ENCODE measurements at regions of chrX and their contacts with region 1.

Region 1: DNA sequence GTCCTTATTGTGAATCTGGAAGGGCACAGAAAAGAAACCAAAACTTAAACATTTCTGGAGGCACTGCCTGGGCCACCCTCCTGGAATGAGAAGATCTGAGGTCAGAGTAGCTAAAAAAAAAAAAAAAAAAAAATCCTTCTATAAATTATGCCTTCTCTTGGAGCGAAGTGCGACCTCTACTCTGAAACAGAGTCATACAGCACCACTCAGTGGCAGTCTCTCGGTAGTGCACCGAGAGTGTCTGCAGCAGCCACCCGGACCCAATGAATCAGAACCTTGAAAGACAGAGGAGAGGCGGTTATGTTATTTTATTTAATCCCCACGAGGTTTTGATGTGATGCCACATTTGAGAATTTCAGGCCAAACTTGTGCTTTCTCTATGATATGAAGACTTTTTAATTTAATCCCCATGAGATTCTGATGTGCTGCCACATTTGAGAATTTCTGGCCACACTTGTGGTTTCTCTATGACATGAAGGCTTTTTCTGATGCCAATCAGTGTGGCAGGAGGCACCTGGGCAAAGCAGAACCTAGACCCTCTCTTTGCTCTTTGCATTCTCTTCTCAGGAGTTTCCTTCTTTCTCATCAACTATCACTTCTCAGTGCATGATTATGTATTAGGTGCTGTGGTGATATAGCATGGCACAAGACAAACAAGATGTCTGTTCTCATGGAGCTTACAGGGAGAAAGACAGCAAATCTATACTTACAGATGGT is 5.6 kb upstream of the CT47C1 start:
- DNase-seq: peak; percentile 26 to 52
- H3K4me3 ChIP-seq: no peak overlapping the region
- H3K27ac ChIP-seq: no peak overlapping the region
- H3K4me1 ChIP-seq: no peaks in the 10 kb centered on the region
- H3K27me3 ChIP-seq: peaks cover 0 to 32% of the 10 kb centered on the region in 2 donors
- CTCF ChIP-seq: peak in 2 of 3 donors; percentile 42 to 48
- POLR2A ChIP-seq: no peak

Region 2: DNA sequence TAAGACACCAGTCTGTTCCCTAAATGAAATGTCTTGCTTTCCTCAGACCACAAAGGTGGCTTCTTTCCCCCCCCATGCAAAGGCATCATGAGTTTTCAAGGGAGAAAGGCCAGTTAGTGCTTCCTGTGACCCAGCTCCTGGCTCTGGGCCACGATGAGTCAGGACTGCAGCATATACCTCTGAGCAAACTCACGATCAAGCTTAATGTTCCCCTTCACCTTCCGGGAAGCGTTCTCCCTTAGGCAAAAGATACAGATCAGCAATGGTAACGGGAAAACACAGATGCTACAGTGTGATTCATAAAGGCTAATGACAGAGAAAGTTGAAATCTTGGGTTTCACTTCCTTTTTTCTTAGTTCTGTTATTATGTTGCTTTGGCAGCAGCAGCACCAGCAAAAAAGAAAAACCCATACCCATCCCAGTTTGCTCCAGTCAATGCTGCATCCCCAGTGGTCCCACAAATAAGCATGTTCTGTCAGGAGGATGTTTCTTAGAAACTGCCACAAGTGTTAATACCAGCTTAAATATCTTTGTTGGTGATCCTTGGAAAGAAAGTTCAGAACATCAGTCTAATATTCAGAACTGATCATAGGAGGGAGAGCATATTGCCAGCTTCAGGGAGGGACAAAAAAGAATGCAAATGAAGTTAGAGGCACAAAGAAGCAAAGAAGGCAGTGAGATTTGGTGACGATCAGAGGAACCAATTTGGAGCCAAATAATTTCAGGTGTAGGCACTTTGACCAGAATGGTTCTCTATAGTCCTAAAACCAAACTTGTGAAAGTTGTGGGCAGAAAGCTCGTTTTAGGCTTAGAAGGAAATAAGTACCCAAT is 51.6 kb before region 1 on chrX:
- intact Hi-C with region 1: loop called (anchors 10 kb)
- DNase-seq: peak; percentile 48 to 56
- H3K4me3 ChIP-seq: no peak overlapping the region
- H3K27ac ChIP-seq: peak overlapping the region in 1 of 2 donors; percentile 34
- H3K4me1 ChIP-seq: no peaks in the 10 kb centered on the region
- H3K27me3 ChIP-seq: peaks cover 0 to 14% of the 10 kb centered on the region in 2 donors
- CTCF ChIP-seq: no peak
- POLR2A ChIP-seq: no peak

Region 3: GRCh38 chrX:119045884-119046283 is 21.3 kb before region 1 on chrX:
- intact Hi-C with region 1: no loop called
- DNase-seq: no peak
- H3K4me3 ChIP-seq: no peak overlapping the region
- H3K27ac ChIP-seq: no peak overlapping the region
- H3K4me1 ChIP-seq: no peaks in the 10 kb centered on the region
- H3K27me3 ChIP-seq: peaks cover 0 to 2% of the 10 kb centered on the region in 2 donors
- CTCF ChIP-seq: no peak
- POLR2A ChIP-seq: no peak